ENCODE measurements at regions of chr14 and their contacts with region 1.

Region 1: GRCh38 chr14:74641601-74642391 is 29.8 kb upstream of the LTBP2 start:
- DNase-seq: no peak
- H3K4me3 ChIP-seq: no peak overlapping the region
- H3K27ac ChIP-seq: no peak overlapping the region
- H3K4me1 ChIP-seq: peaks cover 0 to 9% (median 0%) of the 10 kb centered on the region in 4 experiments
- H3K27me3 ChIP-seq: no peaks in the 10 kb centered on the region

Region 2: GRCh38 chr14:74618078-74618952 is 23.5 kb before region 1 on chr14:
- CTCF ChIA-PET with region 1: interaction called, 41 read pairs
- POLR2A ChIA-PET with region 1: interaction called, 5 read pairs
- DNase-seq: peak; percentile 77 to 95 (median 93)
- H3K4me3 ChIP-seq: peak overlapping the region in 4 of 7 experiments; percentile 11 to 46 (median 22)
- H3K27ac ChIP-seq: no peak overlapping the region
- H3K4me1 ChIP-seq: peaks cover 7 to 60% (median 32%) of the 10 kb centered on the region in 4 experiments
- H3K27me3 ChIP-seq: peaks cover 0 to 9% (median 0%) of the 10 kb centered on the region in 5 experiments

Region 3: GRCh38 chr14:74653386-74654138 is 11.8 kb after region 1 on chr14:
- CTCF ChIA-PET with region 1: interaction called, 12 read pairs
- POLR2A ChIA-PET with region 1: no interaction called
- DNase-seq: no peak
- H3K4me3 ChIP-seq: no peak overlapping the region
- H3K27ac ChIP-seq: no peak overlapping the region
- H3K4me1 ChIP-seq: no peaks in the 10 kb centered on the region
- H3K27me3 ChIP-seq: no peaks in the 10 kb centered on the region